ENCODE measurements at regions of chr12 and their contacts with region 1.

Region 1: GRCh38 chr12:122895705-122896636 is at the start of gene VPS37B:
- DNase-seq: peak; percentile 99
- H3K4me3 ChIP-seq: peak within 1 kb of the TSS; percentile 80 to 81
- H3K27ac ChIP-seq: peak within 1 kb of the TSS; percentile 47 to 52; a peak in 2 of 4 replicates
- H3K4me1 ChIP-seq: peaks cover 11 to 20% of the 10 kb centered on the region in 2 experiments; a peak in 3 of 4 replicates
- H3K27me3 ChIP-seq: no peaks in the 10 kb centered on the region
- CTCF ChIP-seq: no peak
- EP300 ChIP-seq: peak; percentile 3 to 37; a peak in 1 of 4 replicates
- RAD21 ChIP-seq: no peak
- polyA plus RNA-seq, gene VPS37B: 20.9 and 41.1 TPM in 2 replicates

Region 2: GRCh38 chr12:122880668-122881067 is 15.3 kb before region 1 on chr12:
- CTCF ChIA-PET with region 1: interaction called, 12 read pairs
- POLR2A ChIA-PET with region 1: no interaction called
- DNase-seq: peak; percentile 71
- H3K4me3 ChIP-seq: no peak overlapping the region; a peak in 1 of 4 replicates
- H3K27ac ChIP-seq: no peak overlapping the region
- H3K4me1 ChIP-seq: peaks cover 4 to 28% of the 10 kb centered on the region in 2 experiments; a peak in 2 of 4 replicates
- H3K27me3 ChIP-seq: no peaks in the 10 kb centered on the region
- CTCF ChIP-seq: peak; percentile 57
- EP300 ChIP-seq: no peak
- RAD21 ChIP-seq: peak; percentile 67